OCI-LY7 (cell line): ENCODE measurements at regions of chr5 and their contacts with region 1.

Region 1: DNA sequence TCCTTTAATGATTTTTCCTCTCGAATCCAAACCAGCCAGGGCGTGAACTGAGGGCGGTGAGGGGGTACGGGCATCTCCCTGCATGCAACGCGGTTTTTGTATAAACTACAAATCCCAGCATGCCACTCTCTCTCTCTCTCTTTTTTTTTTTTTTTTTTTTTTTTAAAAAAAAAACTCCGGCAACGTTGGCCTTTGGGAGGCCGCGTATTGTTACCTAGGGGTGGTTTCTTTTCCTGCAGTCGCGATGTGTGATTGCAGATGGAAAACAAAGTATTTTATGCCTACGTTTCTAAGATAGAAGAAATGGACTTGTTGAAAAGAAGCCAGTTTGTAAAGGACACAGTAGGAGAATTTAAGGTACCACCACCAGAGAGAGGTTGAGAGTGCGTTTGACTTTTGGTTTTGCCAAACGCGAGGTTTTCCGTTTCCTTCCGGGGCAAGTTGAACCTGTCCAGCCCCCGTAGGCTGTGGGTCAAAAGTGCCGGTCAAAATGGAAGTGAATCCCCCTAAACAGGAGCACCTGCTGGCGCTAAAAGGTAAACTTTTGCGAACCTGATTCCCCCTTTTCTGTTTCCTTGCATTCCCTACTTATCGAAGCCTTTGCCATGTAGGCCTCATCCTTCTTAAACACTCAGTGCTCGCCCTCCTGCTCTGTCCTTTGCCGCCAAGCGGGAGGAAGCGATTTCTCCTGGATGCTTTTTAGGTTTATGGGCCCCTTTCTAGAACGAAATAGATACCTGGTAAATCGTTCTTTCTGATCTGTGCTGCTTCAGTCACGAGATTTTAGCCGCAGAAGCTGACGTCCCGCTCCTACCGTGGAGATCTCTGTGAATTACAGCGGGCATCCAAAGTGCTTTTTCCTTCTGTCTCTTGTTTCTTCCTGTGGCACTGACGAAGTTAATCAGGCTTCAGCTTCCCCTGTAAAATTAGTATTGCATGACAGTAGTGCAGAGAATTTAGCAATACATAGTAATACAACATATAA is at the starts of genes SHLD3 and TRAPPC13:
- DNase-seq: peak; percentile 92
- H3K4me3 ChIP-seq: peak within 1 kb of the TSS; percentile 96
- H3K27ac ChIP-seq: peak within 1 kb of the TSS; percentile 84
- H3K4me1 ChIP-seq: peaks cover 30% of the 10 kb centered on the region
- CTCF ChIP-seq: peak; percentile 11; the same call in 1 of the 2 replicates
- total RNA-seq, gene SHLD3: 4.0 and 5.2 TPM in 2 replicates
- total RNA-seq, gene TRAPPC13: 13.2 and 13.9 TPM in 2 replicates

Region 2: GRCh38 chr5:65562731-65563701 is 61.8 kb before region 1 on chr5 and contains the starts of genes CENPK and PPWD1:
- CTCF ChIA-PET with region 1: no interaction called
- POLR2A ChIA-PET with region 1: interaction called, 18 read pairs
- intact Hi-C with region 1: loop called (anchors 5 kb)
- DNase-seq: peak; percentile 97
- H3K4me3 ChIP-seq: peak within 1 kb of the TSS; percentile 90
- H3K27ac ChIP-seq: peak within 1 kb of the TSS; percentile 80
- H3K4me1 ChIP-seq: peaks cover 29% of the 10 kb centered on the region
- CTCF ChIP-seq: no peak
- total RNA-seq, gene CENPK: 52.6 and 62.4 TPM in 2 replicates
- total RNA-seq, gene PPWD1: 51.5 and 67.6 TPM in 2 replicates

Region 3: DNA sequence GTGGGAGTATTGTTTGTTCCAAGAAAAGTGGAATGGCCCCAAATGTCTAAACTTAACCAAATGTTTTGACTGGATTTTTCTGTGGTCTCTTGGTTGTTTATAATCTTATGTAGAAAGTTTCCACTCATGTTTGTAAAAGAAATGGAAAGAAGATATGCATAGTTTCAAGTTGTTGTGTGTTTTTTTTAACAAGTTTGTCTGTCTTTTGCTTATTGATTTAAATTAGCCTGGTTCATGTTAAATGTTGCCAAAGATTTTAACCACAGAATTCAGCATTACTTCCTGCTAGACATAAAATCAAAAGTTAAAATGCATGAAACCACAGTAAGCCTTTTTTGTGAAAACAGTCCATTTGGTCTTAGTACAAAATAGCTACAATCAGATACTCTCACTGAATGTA is 47.7 kb before region 1 on chr5:
- CTCF ChIA-PET with region 1: no interaction called
- POLR2A ChIA-PET with region 1: no interaction called
- intact Hi-C with region 1: no loop called
- DNase-seq: no peak
- H3K4me3 ChIP-seq: no peak overlapping the region
- H3K27ac ChIP-seq: no peak overlapping the region
- H3K4me1 ChIP-seq: no peaks in the 10 kb centered on the region
- CTCF ChIP-seq: no peak

Region 4: GRCh38 chr5:65611524-65611923 is 13.3 kb before region 1 on chr5:
- CTCF ChIA-PET with region 1: no interaction called
- POLR2A ChIA-PET with region 1: interaction called, 13 read pairs
- intact Hi-C with region 1: no loop called
- DNase-seq: no peak
- H3K4me3 ChIP-seq: no peak overlapping the region
- H3K27ac ChIP-seq: no peak overlapping the region
- H3K4me1 ChIP-seq: no peaks in the 10 kb centered on the region
- CTCF ChIP-seq: no peak

Region 5: DNA sequence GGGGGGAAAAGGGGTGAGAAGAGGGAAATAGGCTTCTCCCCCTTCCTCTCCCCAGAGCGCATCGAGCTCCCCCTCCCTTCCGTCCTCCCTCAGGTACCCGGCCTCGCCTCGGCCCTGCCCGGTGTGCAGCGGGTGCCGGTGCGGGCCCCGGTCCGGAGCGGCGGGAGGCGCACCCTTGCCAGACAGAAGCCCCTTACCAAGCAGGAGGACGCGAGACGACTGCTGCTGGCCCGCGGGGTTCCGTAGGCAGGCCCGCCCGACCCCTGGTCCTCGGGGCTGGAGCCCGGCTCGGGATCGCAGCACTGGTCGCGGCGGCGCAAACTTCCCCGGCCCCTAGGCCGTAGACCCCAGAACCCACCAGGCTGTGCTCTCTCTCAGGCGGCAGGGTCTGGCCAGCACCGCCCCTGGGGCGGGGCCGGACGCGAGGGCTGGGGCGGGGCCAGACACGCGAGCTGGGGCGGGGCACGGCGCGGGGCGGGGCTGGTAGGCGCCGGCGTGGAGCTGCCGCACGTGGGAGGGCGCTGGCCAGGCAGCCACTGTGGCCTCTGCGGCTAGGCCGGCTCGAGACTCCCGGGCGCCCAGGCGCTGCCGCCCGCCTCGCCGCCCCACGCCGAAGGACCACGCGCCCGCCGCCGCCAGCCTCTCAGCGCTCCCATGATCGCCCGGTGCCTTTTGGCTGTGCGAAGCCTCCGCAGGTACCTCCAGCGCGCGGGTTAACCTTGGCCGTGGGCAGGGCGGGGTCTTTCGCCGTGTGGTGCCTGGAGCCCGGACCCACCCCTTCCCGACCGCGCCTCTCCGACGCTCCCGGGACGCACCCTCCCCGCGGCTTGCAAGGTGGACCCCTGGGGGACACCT is 97.1 kb after region 1 on chr5 and contains the starts of genes NLN and SGTB:
- CTCF ChIA-PET with region 1: interaction called, 3 read pairs
- POLR2A ChIA-PET with region 1: interaction called, 3 read pairs
- intact Hi-C with region 1: loop called (anchors 5 kb)
- DNase-seq: peak; percentile 85
- H3K4me3 ChIP-seq: peak within 1 kb of the TSS; percentile 89
- H3K27ac ChIP-seq: peak within 1 kb of the TSS; percentile 45
- H3K4me1 ChIP-seq: peaks cover 39% of the 10 kb centered on the region
- CTCF ChIP-seq: no peak
- total RNA-seq, gene NLN: 11.9 and 14.9 TPM in 2 replicates
- total RNA-seq, gene SGTB: 3.6 and 4.3 TPM in 2 replicates

Region 6: GRCh38 chr5:65925601-65926275 is 300.9 kb after region 1 on chr5:
- CTCF ChIA-PET with region 1: no interaction called
- POLR2A ChIA-PET with region 1: no interaction called
- intact Hi-C with region 1: no loop called
- DNase-seq: peak; percentile 92
- H3K4me3 ChIP-seq: peak overlapping the region; percentile 83
- H3K27ac ChIP-seq: peak overlapping the region; percentile 97
- H3K4me1 ChIP-seq: peaks cover 30% of the 10 kb centered on the region
- CTCF ChIP-seq: peak; percentile 67